MCF 10A (cell line): ENCODE measurements at regions of chr19 and their contacts with region 1.

Region 1: GRCh38 chr19:1825909-1826556 is 14.0 kb upstream of the ATP8B3 start:
- DNase-seq: peak; percentile 81
- H3K4me3 Mint-ChIP-seq: no peak overlapping the region
- H3K27ac Mint-ChIP-seq: no peak overlapping the region
- H3K4me1 Mint-ChIP-seq: peaks cover 4% of the 10 kb centered on the region
- H3K27me3 Mint-ChIP-seq: no peaks in the 10 kb centered on the region
- CTCF ChIP-seq: peak; percentile 96

Region 2: DNA sequence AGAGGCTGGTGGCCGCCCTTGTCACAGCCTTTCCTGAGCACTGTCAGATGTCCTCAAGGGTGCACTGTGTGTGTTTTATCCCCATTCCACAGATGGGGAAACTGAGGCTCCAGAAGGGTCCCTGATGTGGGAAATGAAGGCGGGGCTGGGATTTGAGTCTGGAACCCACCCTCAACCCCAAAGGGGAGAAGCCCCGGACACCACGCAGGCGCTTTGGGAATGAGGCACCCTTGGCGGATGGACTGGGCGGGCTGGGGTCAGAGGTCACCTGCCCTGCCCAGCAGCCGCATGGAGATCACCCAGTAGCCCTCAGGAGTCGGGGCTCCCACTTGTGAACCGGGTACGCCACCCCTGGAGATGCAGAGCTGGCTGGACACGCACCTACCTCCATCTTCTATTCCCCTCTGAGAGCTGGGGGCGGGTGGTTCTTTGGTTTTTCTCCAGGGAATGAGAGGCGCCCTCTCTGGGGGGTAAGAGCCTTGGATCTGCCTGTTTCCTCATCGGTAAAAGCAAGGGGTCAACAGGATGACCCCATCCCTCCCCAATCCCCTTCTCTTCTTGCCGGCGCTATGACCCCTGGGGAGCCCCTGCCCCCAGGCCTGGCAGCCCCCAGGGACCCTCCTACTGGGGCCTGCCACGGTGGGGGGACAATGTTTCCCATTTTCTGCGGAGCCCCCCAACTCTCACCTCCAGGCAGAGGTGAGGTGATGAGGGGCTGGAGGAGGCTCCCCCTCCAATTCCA is 81.0 kb before region 1 on chr19:
- CTCF ChIA-PET with region 1: no interaction called
- POLR2A ChIA-PET with region 1: no interaction called
- intact Hi-C with region 1: no loop called
- DNase-seq: no peak
- H3K4me3 Mint-ChIP-seq: no peak overlapping the region
- H3K27ac Mint-ChIP-seq: no peak overlapping the region
- H3K4me1 Mint-ChIP-seq: no peaks in the 10 kb centered on the region
- H3K27me3 Mint-ChIP-seq: peaks cover 4% of the 10 kb centered on the region
- CTCF ChIP-seq: no peak

Region 3: DNA sequence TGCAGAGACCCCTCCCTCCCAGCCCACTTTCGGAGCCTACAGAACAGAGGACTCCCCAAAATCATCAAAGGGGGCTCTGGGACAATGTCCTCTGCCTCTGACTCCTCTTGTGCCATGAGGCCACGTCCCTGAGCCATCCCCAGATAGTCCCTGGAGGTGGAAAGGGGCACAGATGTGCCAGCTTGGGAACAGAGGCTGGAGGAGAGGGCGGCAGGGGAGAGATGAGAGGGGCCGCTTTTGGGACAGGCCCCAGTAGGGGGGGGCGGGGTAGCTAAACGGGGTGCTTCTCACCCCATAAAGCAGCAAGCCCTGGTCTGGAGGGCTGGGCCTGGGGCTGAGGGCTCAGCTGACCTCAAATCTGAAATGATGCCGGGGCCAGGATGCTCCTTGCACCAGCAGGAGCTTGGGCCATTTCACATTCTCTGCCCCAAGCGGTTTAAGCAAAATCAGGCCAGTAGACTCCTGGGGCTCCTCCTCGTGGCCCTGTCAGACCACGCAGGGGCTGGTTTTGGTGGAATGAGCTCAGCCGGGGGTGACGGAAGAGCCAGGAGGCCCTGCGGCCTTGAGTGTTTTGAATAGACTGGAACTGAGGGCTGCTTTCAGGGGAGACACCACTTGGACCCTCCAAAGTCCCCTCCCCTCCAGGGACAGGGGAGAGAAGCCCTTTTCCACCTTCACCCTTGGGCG is 45.6 kb before region 1 on chr19:
- CTCF ChIA-PET with region 1: interaction called, 18 read pairs
- POLR2A ChIA-PET with region 1: no interaction called
- intact Hi-C with region 1: no loop called
- DNase-seq: no peak
- H3K4me3 Mint-ChIP-seq: no peak overlapping the region
- H3K27ac Mint-ChIP-seq: no peak overlapping the region
- H3K4me1 Mint-ChIP-seq: peaks cover 5% of the 10 kb centered on the region
- H3K27me3 Mint-ChIP-seq: no peaks in the 10 kb centered on the region
- CTCF ChIP-seq: no peak

Region 4: DNA sequence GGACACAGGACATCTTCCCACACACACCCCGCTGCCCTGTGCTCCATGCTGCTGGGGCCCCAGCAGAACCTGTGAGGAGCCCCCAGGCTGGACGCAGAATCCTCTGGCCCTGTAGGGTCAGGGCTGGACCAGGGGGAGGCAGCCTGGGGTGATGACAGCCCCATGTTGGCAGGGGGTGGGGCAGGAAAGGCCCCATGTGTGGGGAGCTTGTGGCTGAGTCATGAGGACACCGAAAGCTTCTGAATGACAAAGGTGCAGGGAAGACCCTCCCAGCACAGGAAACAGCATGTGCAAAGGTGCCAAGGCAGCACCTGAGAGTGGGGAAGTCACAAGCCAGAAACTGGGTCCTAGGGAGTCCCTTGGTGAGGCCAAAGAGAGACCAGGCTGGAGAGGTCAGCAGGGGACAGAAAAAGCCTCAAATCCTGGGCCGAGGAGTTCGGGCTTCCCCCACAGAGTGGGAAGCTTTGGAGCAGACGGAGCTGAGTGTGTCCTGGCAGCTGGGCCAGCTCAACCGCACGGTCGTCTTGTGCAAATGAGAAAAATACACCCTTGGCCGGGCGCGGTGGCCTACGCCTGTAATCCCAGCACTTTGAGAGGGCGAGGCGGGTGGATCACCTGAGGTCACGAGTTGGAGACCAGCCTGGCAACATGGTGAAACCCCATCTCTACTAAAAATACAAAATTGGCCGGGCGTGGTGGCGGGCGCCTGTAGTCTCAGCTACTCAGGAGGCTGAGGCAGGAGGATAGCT is 31.4 kb before region 1 on chr19:
- CTCF ChIA-PET with region 1: interaction called, 11 read pairs
- POLR2A ChIA-PET with region 1: interaction called, 3 read pairs
- intact Hi-C with region 1: no loop called
- DNase-seq: no peak
- H3K4me3 Mint-ChIP-seq: no peak overlapping the region
- H3K27ac Mint-ChIP-seq: no peak overlapping the region
- H3K4me1 Mint-ChIP-seq: peaks cover 14% of the 10 kb centered on the region
- H3K27me3 Mint-ChIP-seq: no peaks in the 10 kb centered on the region
- CTCF ChIP-seq: no peak

Region 5: GRCh38 chr19:1812469-1813196 is 13.4 kb before region 1 on chr19:
- CTCF ChIA-PET with region 1: interaction called, 15 read pairs
- POLR2A ChIA-PET with region 1: interaction called, 8 read pairs
- intact Hi-C with region 1: no loop called
- DNase-seq: peak; percentile 99
- H3K4me3 Mint-ChIP-seq: peak overlapping the region; percentile 93
- H3K27ac Mint-ChIP-seq: peak overlapping the region; percentile 98
- H3K4me1 Mint-ChIP-seq: peaks cover 16% of the 10 kb centered on the region
- H3K27me3 Mint-ChIP-seq: no peaks in the 10 kb centered on the region
- CTCF ChIP-seq: peak; percentile 66

Region 6: DNA sequence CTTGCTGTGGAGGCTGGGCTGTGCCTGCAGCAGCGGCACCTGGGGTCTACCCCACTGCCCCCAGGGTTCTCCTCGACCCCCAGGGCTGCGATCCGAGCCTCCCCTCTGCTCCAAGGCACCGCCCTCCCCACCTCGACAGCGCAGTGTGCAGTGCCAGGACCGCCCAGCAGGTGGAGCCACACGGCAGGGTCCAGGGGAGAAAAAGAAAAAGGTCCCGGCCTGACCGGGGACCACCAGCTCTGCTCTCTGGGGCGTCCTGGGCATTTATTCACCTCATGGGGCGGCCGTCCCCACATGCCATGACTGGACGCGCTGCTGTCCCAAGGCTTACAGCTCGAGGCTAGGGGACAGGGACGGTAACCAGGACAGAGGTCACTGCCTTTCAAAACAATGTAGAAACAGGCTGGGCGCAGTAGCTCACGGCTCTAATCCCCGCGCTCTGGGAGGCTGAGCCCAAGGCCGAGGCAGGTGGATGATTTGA is 11.6 kb after region 1 on chr19:
- CTCF ChIA-PET with region 1: interaction called, 57 read pairs
- POLR2A ChIA-PET with region 1: no interaction called
- intact Hi-C with region 1: no loop called
- DNase-seq: peak; percentile 41
- H3K4me3 Mint-ChIP-seq: no peak overlapping the region
- H3K27ac Mint-ChIP-seq: no peak overlapping the region
- H3K4me1 Mint-ChIP-seq: no peaks in the 10 kb centered on the region
- H3K27me3 Mint-ChIP-seq: no peaks in the 10 kb centered on the region
- CTCF ChIP-seq: peak; percentile 93

Region 7: DNA sequence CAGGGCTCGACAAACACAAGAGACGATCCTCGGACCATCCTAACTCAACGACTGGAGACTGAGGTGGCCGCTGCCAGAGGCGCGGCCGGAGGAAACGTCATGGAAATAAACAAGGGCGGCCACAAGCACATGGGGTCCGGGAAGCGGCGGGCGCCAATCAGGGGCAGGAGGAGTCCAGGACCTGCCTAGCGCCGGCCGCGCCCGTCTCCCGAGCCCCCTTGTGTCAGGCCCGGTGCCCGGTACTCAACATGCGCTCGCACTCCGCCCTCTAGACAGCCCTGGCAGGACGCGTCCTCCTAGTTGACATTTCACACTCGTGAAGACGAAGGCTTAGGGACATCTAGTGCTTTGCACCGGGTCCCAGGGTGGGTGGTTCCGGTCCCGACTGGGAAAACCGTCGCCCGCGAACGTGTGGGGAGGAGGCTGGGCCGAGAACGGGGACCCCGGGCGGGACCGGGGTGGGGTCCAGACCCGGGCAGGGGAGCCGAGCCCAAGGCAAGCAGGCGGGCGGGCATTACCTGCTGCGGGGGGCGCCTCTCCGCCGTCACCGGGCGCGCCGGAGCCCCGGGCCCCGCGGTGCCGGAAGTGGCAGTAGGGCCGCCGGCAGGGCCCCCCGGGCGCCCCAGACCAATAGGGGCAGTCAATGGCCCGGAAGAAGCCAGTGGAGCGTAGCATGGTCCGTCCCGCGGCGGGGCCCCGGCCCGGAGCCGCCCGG is 21.8 kb after region 1 on chr19:
- CTCF ChIA-PET with region 1: interaction called, 19 read pairs
- POLR2A ChIA-PET with region 1: no interaction called
- intact Hi-C with region 1: no loop called
- DNase-seq: peak; percentile 34
- H3K4me3 Mint-ChIP-seq: peak overlapping the region; percentile 84
- H3K27ac Mint-ChIP-seq: peak overlapping the region; percentile 95
- H3K4me1 Mint-ChIP-seq: peaks cover 26% of the 10 kb centered on the region
- H3K27me3 Mint-ChIP-seq: no peaks in the 10 kb centered on the region
- CTCF ChIP-seq: no peak